Testis (tissue), 5 donors: ENCODE measurements at regions of chr1 and their contacts with region 1.

Region 1: DNA sequence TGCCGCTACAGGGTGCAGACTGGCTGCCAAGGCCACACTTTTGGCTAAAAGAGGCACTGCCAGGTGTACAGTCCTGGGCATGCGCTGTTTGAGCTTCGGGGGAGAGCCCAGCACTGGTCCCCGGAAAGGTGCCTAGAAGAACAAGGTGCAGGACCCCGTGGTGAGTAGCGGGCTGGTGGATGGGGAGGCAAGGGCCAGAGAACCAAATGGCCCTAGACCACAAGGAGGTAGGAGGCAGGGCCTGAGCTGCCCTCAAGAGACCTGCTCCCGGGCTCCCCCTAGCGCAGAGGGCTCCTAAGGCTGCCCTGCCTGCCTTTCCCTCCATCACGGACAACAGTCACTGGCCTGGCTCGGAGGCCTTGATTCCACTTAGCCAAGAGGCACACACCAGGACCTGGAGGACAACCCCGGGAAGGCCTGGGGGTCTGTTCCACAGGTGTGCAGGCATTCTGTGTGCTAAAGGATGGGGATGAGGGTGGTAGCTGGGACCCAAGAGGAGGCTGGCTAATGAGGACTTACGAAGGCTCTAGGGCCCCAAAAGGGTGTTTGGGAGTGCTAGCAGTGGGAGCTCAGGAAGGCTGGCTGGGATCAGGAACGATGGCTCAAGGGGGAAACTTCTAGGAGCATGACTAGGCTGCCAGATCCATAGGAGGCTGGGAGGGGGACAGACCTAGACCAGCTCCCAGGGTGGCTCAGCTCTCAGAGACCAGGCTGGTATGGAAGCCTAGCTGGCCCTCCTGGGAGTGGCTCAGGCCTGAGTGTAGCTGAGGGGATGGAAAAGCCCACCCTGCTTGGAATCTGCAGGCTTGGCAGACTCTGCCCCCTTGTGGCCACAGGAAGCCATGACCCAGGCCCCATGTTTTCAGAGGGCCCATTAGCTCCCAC is 742 bp downstream of the ARTN start:
- DNase-seq: peak; percentile 71
- H3K4me3 ChIP-seq: peak overlapping the region in 1 of 2 donors; percentile 11
- H3K27ac ChIP-seq: peak overlapping the region in 1 of 2 donors; percentile 18
- H3K4me1 ChIP-seq: peaks cover 15% of the 10 kb centered on the region
- H3K27me3 ChIP-seq: no peaks in the 10 kb centered on the region
- CTCF ChIP-seq: peak; percentile 85 to 93 (median 90)
- POLR2A ChIP-seq: no peak

Region 2: GRCh38 chr1:43530483-43531106 is 403.7 kb before region 1 on chr1 and contains the start of gene PTPRF:
- intact Hi-C with region 1: loop called (anchors 10 kb)
- DNase-seq: peak; percentile 67
- H3K4me3 ChIP-seq: peak within 1 kb of the TSS; percentile 61 to 62
- H3K27ac ChIP-seq: peak within 1 kb of the TSS in 1 of 2 donors; percentile 10
- H3K4me1 ChIP-seq: peaks cover 7% of the 10 kb centered on the region
- H3K27me3 ChIP-seq: no peaks in the 10 kb centered on the region
- CTCF ChIP-seq: no peak
- POLR2A ChIP-seq: no peak
- total RNA-seq, gene PTPRF: 43.1 to 45.4 TPM

Region 3: GRCh38 chr1:43763497-43763973 is 170.8 kb before region 1 on chr1:
- intact Hi-C with region 1: loop called (anchors 2 kb)
- DNase-seq: peak; percentile 88
- H3K4me3 ChIP-seq: no peak overlapping the region
- H3K27ac ChIP-seq: no peak overlapping the region
- H3K4me1 ChIP-seq: no peaks in the 10 kb centered on the region
- H3K27me3 ChIP-seq: no peaks in the 10 kb centered on the region
- CTCF ChIP-seq: peak; percentile 77 to 87 (median 86)
- POLR2A ChIP-seq: no peak